ENCODE measurements at regions of chr12 and their contacts with region 1.

Region 1: DNA sequence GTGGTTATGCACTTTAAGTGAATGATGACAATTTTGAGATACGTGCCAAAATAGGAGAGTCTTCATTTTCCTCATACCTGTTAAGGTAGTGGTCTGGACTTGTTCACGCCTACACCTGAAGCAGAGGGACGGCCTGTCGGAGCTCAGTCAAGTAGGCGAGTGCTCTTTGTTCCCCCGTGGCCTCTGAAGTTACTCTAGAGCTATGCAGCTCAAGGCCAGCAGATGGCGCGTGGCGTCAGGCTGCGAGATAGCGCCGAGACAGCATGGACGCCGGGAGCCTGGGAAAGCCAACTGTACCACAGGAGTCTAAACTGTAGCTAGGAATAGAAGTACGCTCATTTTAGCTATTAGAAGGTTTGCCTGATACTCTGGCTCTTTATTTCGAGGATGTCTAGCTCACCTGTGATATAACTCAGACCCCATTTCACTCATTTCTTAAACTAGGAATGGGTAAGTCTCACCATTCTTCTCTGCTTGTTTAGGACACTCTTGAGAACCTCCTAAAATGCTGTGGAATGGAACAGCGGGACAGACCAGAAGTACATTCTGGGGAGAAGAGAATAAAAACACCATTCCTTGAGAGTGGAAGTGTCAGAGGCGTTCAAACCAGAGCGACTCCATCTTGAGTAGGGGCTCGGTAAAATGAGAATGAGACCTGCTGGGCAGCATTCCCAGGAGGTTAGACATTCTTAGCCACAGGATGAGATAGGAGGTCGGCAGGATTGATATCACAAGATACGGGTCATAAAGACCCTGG is 267.4 kb upstream of the HMGA2 start:
- DNase-seq: peak; percentile 40
- H3K4me3 Mint-ChIP-seq: no peak overlapping the region
- H3K27ac Mint-ChIP-seq: no peak overlapping the region
- H3K4me1 Mint-ChIP-seq: peaks cover 5% of the 10 kb centered on the region
- H3K27me3 Mint-ChIP-seq: peaks cover 2% of the 10 kb centered on the region

Region 2: GRCh38 chr12:65685514-65685913 is 128.7 kb after region 1 on chr12:
- intact Hi-C with region 1: loop called (anchors 5 kb)
- DNase-seq: no peak
- H3K4me3 Mint-ChIP-seq: no peak overlapping the region
- H3K27ac Mint-ChIP-seq: no peak overlapping the region
- H3K4me1 Mint-ChIP-seq: no peaks in the 10 kb centered on the region
- H3K27me3 Mint-ChIP-seq: peaks cover 4% of the 10 kb centered on the region

Region 3: GRCh38 chr12:66035288-66035966 is 478.6 kb after region 1 on chr12:
- intact Hi-C with region 1: loop called (anchors 2 kb)
- DNase-seq: no peak
- H3K4me3 Mint-ChIP-seq: no peak overlapping the region
- H3K27ac Mint-ChIP-seq: no peak overlapping the region
- H3K4me1 Mint-ChIP-seq: no peaks in the 10 kb centered on the region
- H3K27me3 Mint-ChIP-seq: peaks cover 18% of the 10 kb centered on the region

Region 4: DNA sequence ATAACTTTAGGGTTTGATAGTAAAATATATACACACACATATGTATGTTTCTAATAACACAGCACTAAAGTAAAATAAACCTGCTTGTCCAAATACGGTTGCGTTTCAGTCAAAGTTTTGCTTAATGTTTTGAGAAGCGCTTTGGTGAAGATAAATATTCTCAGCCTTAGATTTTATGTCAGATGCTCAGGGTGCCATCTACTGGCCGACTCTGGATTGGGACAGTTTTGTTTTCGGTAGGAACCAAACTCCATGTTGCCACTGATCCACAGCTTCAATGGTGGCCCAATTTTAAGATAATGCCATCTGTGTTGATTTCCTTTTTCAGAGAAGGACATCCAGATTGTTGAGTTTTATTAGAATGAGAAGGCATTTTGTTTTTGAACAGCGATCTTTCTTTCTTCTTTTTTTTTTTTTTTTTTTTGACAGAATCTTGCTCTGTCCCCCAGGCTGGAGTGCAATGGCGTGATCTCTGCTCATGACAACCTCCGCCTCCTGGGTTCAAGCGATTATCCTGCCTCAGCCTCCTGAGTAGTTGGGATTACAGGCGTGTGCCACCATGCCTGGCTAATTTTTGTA is 530.6 kb after region 1 on chr12:
- intact Hi-C with region 1: loop called (anchors 2 kb)
- DNase-seq: peak; percentile 17
- H3K4me3 Mint-ChIP-seq: no peak overlapping the region
- H3K27ac Mint-ChIP-seq: no peak overlapping the region
- H3K4me1 Mint-ChIP-seq: no peaks in the 10 kb centered on the region
- H3K27me3 Mint-ChIP-seq: peaks cover 23% of the 10 kb centered on the region

Region 5: GRCh38 chr12:66107451-66107915 is 550.6 kb after region 1 on chr12:
- intact Hi-C with region 1: loop called (anchors 5 kb)
- DNase-seq: peak; percentile 36
- H3K4me3 Mint-ChIP-seq: no peak overlapping the region
- H3K27ac Mint-ChIP-seq: no peak overlapping the region
- H3K4me1 Mint-ChIP-seq: peaks cover 8% of the 10 kb centered on the region
- H3K27me3 Mint-ChIP-seq: peaks cover 21% of the 10 kb centered on the region

Measured in activated T-helper 2 cell treated with anti-CD3 and anti-CD28 coated beads, Interferon-gamma antibody, Interleukin-2, Interleukin-4, amounts not matched to agents 10 μg/mL and 5 μg/mL and 100 μg/mL, durations not matched to agents 14 hours and 24 hours and 36 hours (primary cell).